WTC11 (cell line): ENCODE measurements at regions of chr10 and their contacts with region 1.

Region 1: GRCh38 chr10:80506189-80506575 is 31.5 kb upstream of the SH2D4B start:
- DNase-seq: no peak
- ATAC-seq: no peak
- H3K4me3 Mint-ChIP-seq: no peak overlapping the region
- H3K27ac Mint-ChIP-seq: peak overlapping the region; percentile 36; the same call in 1 of the 2 replicates
- H3K4me1 Mint-ChIP-seq: peaks cover 37% of the 10 kb centered on the region
- H3K27me3 Mint-ChIP-seq: no peaks in the 10 kb centered on the region
- CTCF ChIP-seq: no peak

Region 2: DNA sequence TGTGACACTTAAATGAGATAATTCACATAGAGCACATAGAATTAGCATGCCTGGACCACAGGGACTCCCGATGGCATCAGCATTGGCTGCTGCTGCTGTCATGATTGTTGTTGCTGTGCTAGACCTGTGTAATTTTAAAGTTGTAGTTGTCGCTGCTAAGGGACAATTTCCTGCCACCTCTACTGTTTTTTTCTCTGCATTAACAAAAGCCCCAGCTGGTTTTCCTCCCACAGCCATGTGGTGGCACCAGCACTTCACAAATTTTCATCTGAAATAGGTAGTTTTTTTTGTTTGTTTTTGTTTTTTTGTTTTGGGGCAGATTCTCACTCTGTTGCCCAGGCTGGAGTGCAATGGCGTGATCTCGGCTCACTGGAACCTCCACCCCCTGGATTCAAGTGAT is 123.2 kb before region 1 on chr10:
- CTCF ChIA-PET with region 1: interaction called, 42 read pairs
- POLR2A ChIA-PET with region 1: interaction called, 3 read pairs
- DNase-seq: peak; percentile 44
- ATAC-seq: peak; percentile 56
- H3K4me3 Mint-ChIP-seq: no peak overlapping the region
- H3K27ac Mint-ChIP-seq: 0 out of 2 replicates have a peak overlapping the region, but pooled peaks have one; percentile 12
- H3K4me1 Mint-ChIP-seq: peaks cover 5% of the 10 kb centered on the region; the same call in 1 of the 2 replicates
- H3K27me3 Mint-ChIP-seq: no peaks in the 10 kb centered on the region
- CTCF ChIP-seq: no peak; the same call in 1 of the 2 replicates

Region 3: DNA sequence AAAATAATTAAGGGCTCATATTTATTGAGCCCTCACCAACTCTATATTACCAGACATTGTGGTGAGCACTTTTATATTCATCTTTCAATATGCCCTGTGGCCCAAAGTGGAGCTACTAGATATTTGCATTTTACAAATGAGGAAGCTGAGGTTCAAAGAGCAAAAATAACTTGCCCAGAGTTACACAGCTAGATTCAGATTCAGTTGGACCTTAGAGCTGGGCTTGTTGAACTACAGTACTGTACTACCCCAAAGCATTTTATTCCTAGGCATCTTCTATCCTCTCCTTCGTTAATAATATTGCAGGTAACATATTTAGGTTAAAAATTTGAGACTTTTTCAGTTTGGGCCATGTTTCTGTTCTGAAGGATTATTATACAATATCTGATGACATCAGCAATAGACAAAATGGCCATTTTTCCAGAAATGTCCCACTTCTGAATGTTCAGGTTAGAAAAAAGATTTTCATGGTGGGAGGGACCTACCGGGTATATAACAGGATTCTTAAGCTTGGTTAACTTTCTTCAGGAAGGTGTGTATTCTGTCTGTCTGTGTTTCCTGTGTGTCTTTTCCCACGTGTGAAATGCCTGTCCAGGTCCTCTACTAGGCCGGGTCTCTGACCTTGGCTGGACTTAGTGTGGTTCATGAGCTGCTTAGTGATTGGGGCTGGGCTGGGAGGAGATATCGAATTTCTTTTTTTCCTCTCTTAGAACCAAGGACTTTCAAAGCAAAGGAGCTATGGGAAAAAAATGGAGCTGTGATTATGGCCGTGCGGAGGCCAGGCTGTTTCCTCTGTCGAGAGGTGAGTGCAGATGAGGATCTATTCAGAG is 84.3 kb before region 1 on chr10:
- CTCF ChIA-PET with region 1: interaction called, 11 read pairs
- POLR2A ChIA-PET with region 1: no interaction called
- DNase-seq: no peak
- ATAC-seq: no peak
- H3K4me3 Mint-ChIP-seq: no peak overlapping the region
- H3K27ac Mint-ChIP-seq: no peak overlapping the region
- H3K4me1 Mint-ChIP-seq: peaks cover 30% of the 10 kb centered on the region
- H3K27me3 Mint-ChIP-seq: peaks cover under 1% of the 10 kb centered on the region
- CTCF ChIP-seq: no peak

Region 4: GRCh38 chr10:80477813-80478212 is 28.4 kb before region 1 on chr10:
- CTCF ChIA-PET with region 1: interaction called, 31 read pairs
- POLR2A ChIA-PET with region 1: no interaction called
- DNase-seq: no peak
- ATAC-seq: no peak
- H3K4me3 Mint-ChIP-seq: no peak overlapping the region
- H3K27ac Mint-ChIP-seq: no peak overlapping the region
- H3K4me1 Mint-ChIP-seq: peaks cover 52% of the 10 kb centered on the region
- H3K27me3 Mint-ChIP-seq: no peaks in the 10 kb centered on the region
- CTCF ChIP-seq: no peak

Region 5: DNA sequence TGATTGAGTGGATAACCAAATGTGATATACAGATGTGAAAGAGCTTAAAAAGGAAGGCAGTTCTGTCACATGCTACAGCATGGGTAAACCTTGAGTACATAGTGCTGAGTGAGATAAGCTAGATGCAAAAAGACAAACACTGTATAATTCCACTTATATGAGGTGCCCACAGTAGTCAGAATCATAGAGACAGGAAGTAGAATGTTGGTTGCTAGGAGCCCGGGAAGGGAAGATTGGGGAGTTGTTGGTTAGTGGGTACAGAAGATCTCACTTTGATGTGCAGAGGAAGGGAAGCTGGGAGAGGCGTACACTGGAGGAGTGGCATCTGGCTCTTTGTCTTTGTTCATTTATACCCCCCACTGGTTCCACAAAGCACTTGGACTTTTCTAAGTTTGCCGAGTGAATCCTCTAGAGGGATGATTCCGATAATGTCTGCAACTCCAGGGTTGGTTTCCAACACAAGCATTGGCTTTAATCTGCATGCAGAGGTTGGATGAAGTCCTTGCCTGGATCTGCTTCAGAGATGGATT is 12.6 kb before region 1 on chr10:
- CTCF ChIA-PET with region 1: interaction called, 66 read pairs
- POLR2A ChIA-PET with region 1: no interaction called
- DNase-seq: no peak
- ATAC-seq: no peak
- H3K4me3 Mint-ChIP-seq: no peak overlapping the region
- H3K27ac Mint-ChIP-seq: no peak overlapping the region; the same call in 1 of the 2 replicates
- H3K4me1 Mint-ChIP-seq: peaks cover 33% of the 10 kb centered on the region
- H3K27me3 Mint-ChIP-seq: no peaks in the 10 kb centered on the region
- CTCF ChIP-seq: no peak

Region 6: DNA sequence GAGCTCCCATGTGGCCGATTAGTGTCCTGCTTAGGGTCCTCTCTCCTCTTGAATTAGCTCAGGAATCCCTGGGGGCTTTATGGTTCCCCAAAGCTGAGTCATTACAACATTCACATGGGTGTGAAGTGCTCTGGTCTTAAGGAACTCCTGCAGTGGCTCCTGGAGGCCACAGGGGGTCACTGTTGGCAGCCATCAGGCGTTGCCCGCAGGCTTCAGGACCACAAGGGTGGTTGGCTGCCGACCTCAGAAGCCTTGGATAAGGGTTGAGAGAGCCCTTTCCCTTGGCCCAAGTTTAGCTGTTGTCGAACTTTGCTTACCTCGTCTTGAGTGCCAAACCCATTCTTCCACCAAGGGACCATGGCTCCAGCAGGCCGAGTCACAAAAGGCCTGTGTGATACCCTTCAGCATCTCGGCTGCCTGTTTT is 93.3 kb after region 1 on chr10:
- CTCF ChIA-PET with region 1: interaction called, 31 read pairs
- POLR2A ChIA-PET with region 1: no interaction called
- DNase-seq: peak; percentile 78
- ATAC-seq: peak; percentile 93
- H3K4me3 Mint-ChIP-seq: no peak overlapping the region
- H3K27ac Mint-ChIP-seq: no peak overlapping the region
- H3K4me1 Mint-ChIP-seq: 0 out of 2 replicates have a peak, but pooled peaks cover 5% of the 10 kb centered on the region
- H3K27me3 Mint-ChIP-seq: no peaks in the 10 kb centered on the region
- CTCF ChIP-seq: peak; percentile 83